Activated CD8-positive, alpha-beta T cell treated with anti-CD3 and anti-CD28 coated beads for 36 hours (primary cell): ENCODE measurements at regions of chr12 and their contacts with region 1.

Region 1: DNA sequence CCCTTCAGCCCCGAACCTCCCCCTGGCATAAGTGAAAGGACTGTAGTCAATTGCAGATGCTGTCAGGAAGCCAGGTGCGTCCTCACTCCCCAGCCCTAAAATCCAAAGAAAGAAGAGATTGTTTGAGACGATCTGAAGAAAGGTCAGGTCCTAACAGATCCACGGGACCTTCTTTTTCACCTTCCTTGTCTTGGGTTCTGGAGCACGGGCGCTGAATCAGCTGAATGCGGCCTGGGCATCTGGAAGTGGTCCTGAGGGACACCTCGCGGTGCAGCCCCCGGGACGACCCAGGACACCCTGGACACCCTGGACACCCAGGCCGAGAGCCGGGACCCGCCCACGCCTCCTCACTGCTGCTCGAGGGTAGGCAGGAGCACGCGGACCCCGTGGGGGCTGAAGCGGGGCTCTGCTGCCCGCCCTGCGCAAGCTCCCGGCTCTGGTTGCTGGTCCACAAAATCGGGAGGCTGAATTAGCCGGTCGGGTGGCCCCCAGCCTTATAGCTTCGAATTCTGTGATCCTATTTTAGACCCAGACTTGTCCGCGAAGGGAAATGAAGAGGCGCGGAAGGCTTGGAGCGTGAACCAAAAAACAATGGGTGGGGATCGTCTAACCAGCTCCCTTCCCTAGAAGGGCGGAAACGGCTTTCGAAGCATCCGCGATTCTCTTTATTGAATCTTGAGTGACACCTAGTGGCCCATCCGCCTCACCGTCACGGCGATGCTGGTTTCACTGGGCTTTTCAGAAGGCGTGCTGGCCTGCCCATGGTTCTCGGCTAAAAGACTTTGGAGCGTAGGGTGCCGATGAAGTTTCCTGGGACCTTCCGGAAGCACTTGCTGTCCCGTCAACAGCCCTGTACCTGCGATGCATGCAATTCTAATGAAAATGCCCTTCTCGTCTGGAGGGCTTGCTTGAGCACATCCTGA is 46.4 kb upstream of the PLXNC1 start:
- DNase-seq: peak; percentile 93
- ATAC-seq: peak; percentile 81
- H3K4me3 Mint-ChIP-seq: peak overlapping the region; percentile 77
- H3K27ac Mint-ChIP-seq: peak overlapping the region; percentile 75
- H3K4me1 Mint-ChIP-seq: peaks cover 18% of the 10 kb centered on the region
- H3K27me3 Mint-ChIP-seq: peaks cover 15% of the 10 kb centered on the region
- CTCF ChIP-seq: peak; percentile 72

Region 2: DNA sequence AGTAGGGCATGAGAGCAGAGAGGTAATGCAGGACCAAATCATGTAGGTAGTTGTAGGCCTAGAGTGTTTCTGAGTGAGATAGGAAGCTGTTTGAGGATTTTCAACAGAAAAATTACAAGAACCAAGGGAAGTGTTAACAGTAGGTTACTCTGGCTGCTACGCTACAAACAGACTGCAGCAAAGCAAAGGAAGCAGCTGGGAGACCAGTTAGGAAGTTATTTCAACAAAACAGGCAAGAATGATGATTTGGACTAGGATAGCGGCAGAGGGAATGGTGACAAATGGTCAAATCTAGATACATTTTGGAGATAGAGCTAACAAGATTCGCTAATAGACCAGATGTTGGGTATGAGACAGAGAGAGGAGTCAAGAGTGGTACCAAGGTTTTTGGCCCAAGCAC is 607.9 kb before region 1 on chr12:
- CTCF ChIA-PET with region 1: interaction called, 11 read pairs
- POLR2A ChIA-PET with region 1: no interaction called
- intact Hi-C with region 1: no loop called
- DNase-seq: no peak
- ATAC-seq: no peak
- H3K4me3 Mint-ChIP-seq: no peak overlapping the region
- H3K27ac Mint-ChIP-seq: no peak overlapping the region
- H3K4me1 Mint-ChIP-seq: peaks cover 14% of the 10 kb centered on the region
- H3K27me3 Mint-ChIP-seq: no peaks in the 10 kb centered on the region
- CTCF ChIP-seq: no peak

Region 3: DNA sequence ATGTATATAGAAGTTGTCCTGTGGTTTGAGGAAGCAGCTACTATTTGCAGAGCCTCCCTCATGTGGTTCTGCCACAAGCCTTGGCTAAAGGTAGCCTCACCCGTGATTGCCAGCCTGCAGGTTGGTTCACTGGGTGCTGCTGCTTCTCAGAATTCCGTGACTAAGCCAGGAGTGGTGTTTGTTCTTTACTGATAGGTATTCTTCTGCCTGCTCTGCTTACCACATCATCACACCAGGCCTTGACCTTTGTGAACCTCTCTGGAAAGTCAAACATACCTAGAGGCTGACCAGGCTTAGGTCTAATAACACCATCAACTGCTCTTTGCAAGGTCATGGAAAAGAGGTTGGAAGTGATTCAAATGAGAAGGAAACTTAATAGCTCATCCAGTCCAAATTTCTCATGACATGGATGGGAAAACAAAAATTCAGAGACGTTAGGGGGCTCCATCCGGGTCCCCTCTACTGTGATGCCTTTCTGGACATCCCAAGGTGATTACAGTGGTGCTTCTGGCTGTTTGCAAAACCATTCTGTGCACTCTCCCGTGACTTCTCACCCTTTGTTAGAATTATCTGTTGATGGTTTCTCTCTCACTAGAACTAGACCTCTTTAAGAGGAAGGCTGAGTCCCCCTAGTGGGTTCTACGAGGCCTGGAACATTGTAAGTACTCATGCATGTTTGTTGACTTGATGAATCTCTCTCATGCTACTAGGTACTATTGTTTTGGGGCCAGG is 538.0 kb before region 1 on chr12:
- CTCF ChIA-PET with region 1: interaction called, 143 read pairs
- POLR2A ChIA-PET with region 1: interaction called, 18 read pairs
- intact Hi-C with region 1: loop called (anchors 1 kb)
- DNase-seq: peak; percentile 14
- ATAC-seq: peak; percentile 53
- H3K4me3 Mint-ChIP-seq: no peak overlapping the region
- H3K27ac Mint-ChIP-seq: no peak overlapping the region
- H3K4me1 Mint-ChIP-seq: peaks cover 6% of the 10 kb centered on the region
- H3K27me3 Mint-ChIP-seq: no peaks in the 10 kb centered on the region
- CTCF ChIP-seq: no peak

Region 4: GRCh38 chr12:93759512-93760081 is 342.4 kb before region 1 on chr12:
- CTCF ChIA-PET with region 1: interaction called, 152 read pairs
- POLR2A ChIA-PET with region 1: interaction called, 3 read pairs
- intact Hi-C with region 1: no loop called
- DNase-seq: no peak
- ATAC-seq: no peak
- H3K4me3 Mint-ChIP-seq: no peak overlapping the region
- H3K27ac Mint-ChIP-seq: no peak overlapping the region
- H3K4me1 Mint-ChIP-seq: peaks cover 32% of the 10 kb centered on the region
- H3K27me3 Mint-ChIP-seq: no peaks in the 10 kb centered on the region
- CTCF ChIP-seq: no peak

Region 5: GRCh38 chr12:93979189-93979588 is 122.8 kb before region 1 on chr12:
- CTCF ChIA-PET with region 1: interaction called, 83 read pairs
- POLR2A ChIA-PET with region 1: interaction called, 6 read pairs
- intact Hi-C with region 1: loop called (anchors 10 kb)
- DNase-seq: peak; percentile 44
- ATAC-seq: no peak
- H3K4me3 Mint-ChIP-seq: no peak overlapping the region
- H3K27ac Mint-ChIP-seq: no peak overlapping the region
- H3K4me1 Mint-ChIP-seq: peaks cover 20% of the 10 kb centered on the region
- H3K27me3 Mint-ChIP-seq: peaks cover 2% of the 10 kb centered on the region
- CTCF ChIP-seq: peak; percentile 35

Region 6: GRCh38 chr12:94062796-94063635 is 39.0 kb before region 1 on chr12:
- CTCF ChIA-PET with region 1: no interaction called
- POLR2A ChIA-PET with region 1: no interaction called
- intact Hi-C with region 1: no loop called
- DNase-seq: no peak
- ATAC-seq: no peak
- H3K4me3 Mint-ChIP-seq: no peak overlapping the region
- H3K27ac Mint-ChIP-seq: no peak overlapping the region
- H3K4me1 Mint-ChIP-seq: no peaks in the 10 kb centered on the region
- H3K27me3 Mint-ChIP-seq: no peaks in the 10 kb centered on the region
- CTCF ChIP-seq: no peak

Region 7: GRCh38 chr12:94074980-94075928 is 26.7 kb before region 1 on chr12:
- CTCF ChIA-PET with region 1: interaction called, 66 read pairs
- POLR2A ChIA-PET with region 1: interaction called, 4 read pairs
- intact Hi-C with region 1: no loop called
- DNase-seq: peak; percentile 32
- ATAC-seq: peak; percentile 62
- H3K4me3 Mint-ChIP-seq: no peak overlapping the region
- H3K27ac Mint-ChIP-seq: no peak overlapping the region
- H3K4me1 Mint-ChIP-seq: peaks cover 12% of the 10 kb centered on the region
- H3K27me3 Mint-ChIP-seq: peaks cover 5% of the 10 kb centered on the region
- CTCF ChIP-seq: peak; percentile 14

Region 8: GRCh38 chr12:94186278-94187241 is 84.6 kb after region 1 on chr12:
- CTCF ChIA-PET with region 1: no interaction called
- POLR2A ChIA-PET with region 1: no interaction called
- intact Hi-C with region 1: no loop called
- DNase-seq: no peak
- ATAC-seq: no peak
- H3K4me3 Mint-ChIP-seq: no peak overlapping the region
- H3K27ac Mint-ChIP-seq: no peak overlapping the region
- H3K4me1 Mint-ChIP-seq: peaks cover 6% of the 10 kb centered on the region
- H3K27me3 Mint-ChIP-seq: no peaks in the 10 kb centered on the region
- CTCF ChIP-seq: no peak

Region 9: DNA sequence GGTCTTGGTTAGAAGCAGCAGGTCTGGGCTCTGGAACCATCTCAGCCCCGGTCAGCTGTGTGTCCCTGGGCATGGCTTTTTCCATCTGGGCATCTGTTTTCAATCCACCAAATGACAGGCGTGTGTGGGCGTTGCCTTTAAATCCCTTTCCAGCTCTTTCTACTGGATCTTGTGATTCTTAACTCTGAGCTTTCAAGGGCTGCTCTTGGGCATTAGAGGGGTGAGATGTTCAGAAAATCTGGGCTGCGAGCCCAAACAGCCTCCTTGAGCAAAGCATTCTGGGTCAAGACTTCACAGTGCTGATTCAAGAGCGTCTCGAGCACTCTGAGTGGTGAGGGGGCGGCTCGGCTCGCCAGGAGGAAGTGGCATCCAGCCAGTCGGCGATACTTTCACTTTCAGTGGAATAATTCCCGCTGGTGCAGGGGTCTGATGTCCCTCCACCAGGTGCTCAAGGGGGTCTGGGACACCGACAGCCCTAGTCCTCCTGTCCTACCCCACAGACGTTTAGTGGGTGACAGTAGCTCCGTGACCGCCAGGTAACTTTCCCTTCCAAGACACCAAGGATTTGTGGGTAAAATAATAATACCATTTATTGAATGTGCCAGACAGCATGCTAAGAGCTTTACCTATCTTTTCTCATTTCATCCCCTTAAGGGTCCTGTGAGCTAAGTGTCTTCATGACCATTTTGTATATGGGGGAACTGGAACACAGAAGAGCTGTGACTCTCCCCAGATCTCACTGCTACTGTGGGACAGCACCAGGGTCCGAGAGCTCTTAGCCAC is 160.4 kb after region 1 on chr12:
- CTCF ChIA-PET with region 1: no interaction called
- POLR2A ChIA-PET with region 1: no interaction called
- intact Hi-C with region 1: no loop called
- DNase-seq: peak; percentile 90
- ATAC-seq: peak; percentile 81
- H3K4me3 Mint-ChIP-seq: peak overlapping the region; percentile 88
- H3K27ac Mint-ChIP-seq: peak overlapping the region; percentile 99
- H3K4me1 Mint-ChIP-seq: peaks cover 40% of the 10 kb centered on the region
- H3K27me3 Mint-ChIP-seq: no peaks in the 10 kb centered on the region
- CTCF ChIP-seq: no peak

Region 10: GRCh38 chr12:94305130-94305957 is 203.3 kb after region 1 on chr12:
- CTCF ChIA-PET with region 1: no interaction called
- POLR2A ChIA-PET with region 1: no interaction called
- intact Hi-C with region 1: no loop called
- DNase-seq: peak; percentile 79
- ATAC-seq: peak; percentile 92
- H3K4me3 Mint-ChIP-seq: peak overlapping the region; percentile 40
- H3K27ac Mint-ChIP-seq: peak overlapping the region; percentile 75
- H3K4me1 Mint-ChIP-seq: peaks cover 48% of the 10 kb centered on the region
- H3K27me3 Mint-ChIP-seq: peaks cover 1% of the 10 kb centered on the region
- CTCF ChIP-seq: no peak